K562 (cell line): ENCODE measurements at regions of chr3 and their contacts with region 1.

Region 1: GRCh38 chr3:44782891-44783290 is 21.3 kb downstream of the KIF15 start:
- DNase-seq: no peak
- ATAC-seq: no peak
- H3K4me3 ChIP-seq: no peak overlapping the region
- H3K27ac ChIP-seq: no peak overlapping the region
- H3K4me1 ChIP-seq: no peaks in the 10 kb centered on the region
- H3K27me3 ChIP-seq: no peaks in the 10 kb centered on the region
- CTCF ChIP-seq: no peak
- EP300 ChIP-seq: no peak
- POLR2A ChIP-seq: no peak
- RAD21 ChIP-seq: no peak

Region 2: DNA sequence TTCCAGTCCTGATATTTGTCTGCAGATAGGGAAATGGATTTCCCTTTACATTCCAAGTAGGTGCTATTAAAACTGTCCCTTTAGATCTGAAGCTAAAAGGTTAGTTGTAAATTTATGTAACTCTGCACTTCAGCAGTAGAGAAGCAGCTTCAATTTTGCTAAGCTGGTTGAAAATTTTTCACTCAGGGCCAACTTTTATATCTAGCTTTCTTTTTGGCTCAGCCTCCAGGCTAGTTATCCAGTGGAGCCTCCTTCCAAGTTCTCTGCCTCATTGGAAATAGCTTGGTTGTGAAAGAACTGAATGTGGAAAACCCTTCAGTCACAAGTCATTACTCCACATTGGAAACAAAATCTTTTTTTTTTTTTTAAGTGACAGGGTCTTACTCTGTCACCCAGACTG is 206.3 kb before region 1 on chr3:
- CTCF ChIA-PET with region 1: no interaction called
- POLR2A ChIA-PET with region 1: no interaction called
- in situ Hi-C with region 1: no loop called
- intact Hi-C with region 1: no loop called
- DNase-seq: no peak
- ATAC-seq: no peak
- H3K4me3 ChIP-seq: no peak overlapping the region
- H3K27ac ChIP-seq: no peak overlapping the region
- H3K4me1 ChIP-seq: 0 out of 5 replicates have a peak, but pooled peaks cover 0 to 3% of the 10 kb centered on the region in 2 experiments
- H3K27me3 ChIP-seq: peaks cover 12 to 34% of the 10 kb centered on the region in 2 experiments; a peak in 4 of 5 replicates
- CTCF ChIP-seq: no peak
- EP300 ChIP-seq: no peak
- POLR2A ChIP-seq: no peak
- RAD21 ChIP-seq: no peak

Region 3: GRCh38 chr3:44601749-44602148 is 181.1 kb before region 1 on chr3:
- CTCF ChIA-PET with region 1: no interaction called
- POLR2A ChIA-PET with region 1: no interaction called
- in situ Hi-C with region 1: no loop called
- intact Hi-C with region 1: no loop called
- DNase-seq: no peak
- ATAC-seq: no peak
- H3K4me3 ChIP-seq: no peak overlapping the region
- H3K27ac ChIP-seq: no peak overlapping the region
- H3K4me1 ChIP-seq: no peaks in the 10 kb centered on the region
- H3K27me3 ChIP-seq: no peaks in the 10 kb centered on the region
- CTCF ChIP-seq: no peak
- EP300 ChIP-seq: no peak
- POLR2A ChIP-seq: no peak
- RAD21 ChIP-seq: no peak

Region 4: DNA sequence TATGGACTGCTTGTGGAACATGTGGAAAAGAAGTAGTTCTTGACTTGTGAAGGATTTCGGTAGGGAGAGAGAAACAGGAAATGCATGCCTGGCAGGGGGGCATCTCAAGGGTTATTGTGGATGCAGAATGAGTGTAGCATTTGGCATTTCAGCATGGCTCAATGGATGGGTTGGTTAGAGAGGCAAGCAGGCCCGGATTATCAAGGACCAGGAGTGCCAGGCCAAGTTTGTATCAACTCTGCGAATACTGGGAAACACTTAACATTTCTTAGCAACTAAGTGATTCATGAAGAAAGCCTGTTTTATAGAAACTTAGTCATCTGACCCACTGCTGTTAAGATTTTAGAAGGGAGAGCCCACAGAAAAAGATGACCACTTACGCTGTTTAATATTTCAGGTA is 12.3 kb after region 1 on chr3:
- CTCF ChIA-PET with region 1: no interaction called
- POLR2A ChIA-PET with region 1: interaction called, 7 read pairs
- in situ Hi-C with region 1: no loop called
- intact Hi-C with region 1: loop called (anchors 2 kb)
- DNase-seq: no peak
- ATAC-seq: no peak
- H3K4me3 ChIP-seq: no peak overlapping the region
- H3K27ac ChIP-seq: no peak overlapping the region
- H3K4me1 ChIP-seq: no peaks in the 10 kb centered on the region
- H3K27me3 ChIP-seq: no peaks in the 10 kb centered on the region
- CTCF ChIP-seq: no peak
- EP300 ChIP-seq: no peak
- POLR2A ChIP-seq: no peak
- RAD21 ChIP-seq: no peak

Region 5: DNA sequence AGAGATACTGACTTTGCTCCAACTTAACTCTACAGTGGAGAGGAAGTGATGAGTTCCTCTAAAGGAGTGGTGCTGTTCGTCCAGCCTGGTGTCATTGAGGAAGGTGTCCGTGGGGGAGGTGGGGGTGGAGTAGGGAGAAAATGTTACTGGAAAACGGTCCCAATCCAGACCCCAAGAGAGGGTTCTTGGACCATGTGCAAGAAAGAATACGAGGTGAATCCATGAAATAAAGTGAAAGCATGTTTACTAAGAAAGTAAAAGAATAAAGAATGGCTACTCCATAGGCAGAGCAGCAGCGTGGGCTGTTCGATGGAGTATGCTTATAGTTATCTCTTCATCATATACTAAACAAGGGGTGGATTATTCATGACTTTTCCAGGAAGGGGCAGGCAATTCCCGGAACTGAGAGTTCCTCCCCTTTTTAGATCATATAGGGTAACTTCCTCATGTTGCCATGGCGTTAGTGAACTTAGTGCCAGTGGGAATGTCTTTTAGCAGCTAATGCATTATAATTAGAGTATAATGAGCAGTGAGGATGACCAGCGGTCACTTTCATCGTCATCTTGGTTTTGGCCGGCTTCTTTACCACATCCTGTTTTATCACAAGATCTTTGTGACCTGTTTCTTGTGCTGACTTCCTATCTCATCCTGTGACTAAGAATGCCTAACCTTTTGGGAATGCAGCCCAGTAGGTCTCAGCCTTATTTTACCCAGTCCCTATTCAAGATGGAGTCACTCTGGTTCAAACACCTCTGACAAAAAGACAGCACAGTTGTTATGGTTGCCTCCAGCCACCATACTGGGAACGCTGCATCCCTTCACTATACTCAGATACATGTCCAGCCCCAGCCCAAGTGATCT is 281.9 kb after region 1 on chr3:
- CTCF ChIA-PET with region 1: no interaction called
- POLR2A ChIA-PET with region 1: no interaction called
- in situ Hi-C with region 1: no loop called
- intact Hi-C with region 1: no loop called
- DNase-seq: peak; percentile 58 to 99 (median 70)
- ATAC-seq: peak; percentile 73
- H3K4me3 ChIP-seq: peak overlapping the region; percentile 12; the same call in 1 of the 2 replicates
- H3K27ac ChIP-seq: peak overlapping the region; percentile 94
- H3K4me1 ChIP-seq: peaks cover 25 to 68% of the 10 kb centered on the region in 2 experiments
- H3K27me3 ChIP-seq: no peaks in the 10 kb centered on the region
- CTCF ChIP-seq: no peak
- EP300 ChIP-seq: peak; percentile 85
- POLR2A ChIP-seq: peak; percentile 92
- RAD21 ChIP-seq: peak; percentile 9 to 92; a peak in 3 of 4 replicates